ENCODE measurements at regions of chr2 and their contacts with region 1.

Region 1: GRCh38 chr2:27291865-27292264 is 9.6 kb downstream of the TRIM54 start:
- DNase-seq: peak; percentile 35
- ATAC-seq: peak; percentile 95
- H3K4me3 Mint-ChIP-seq: peak overlapping the region; percentile 29
- H3K27ac Mint-ChIP-seq: no peak overlapping the region
- H3K4me1 Mint-ChIP-seq: peaks cover 18% of the 10 kb centered on the region
- H3K27me3 Mint-ChIP-seq: no peaks in the 10 kb centered on the region
- CTCF ChIP-seq: no peak

Region 2: DNA sequence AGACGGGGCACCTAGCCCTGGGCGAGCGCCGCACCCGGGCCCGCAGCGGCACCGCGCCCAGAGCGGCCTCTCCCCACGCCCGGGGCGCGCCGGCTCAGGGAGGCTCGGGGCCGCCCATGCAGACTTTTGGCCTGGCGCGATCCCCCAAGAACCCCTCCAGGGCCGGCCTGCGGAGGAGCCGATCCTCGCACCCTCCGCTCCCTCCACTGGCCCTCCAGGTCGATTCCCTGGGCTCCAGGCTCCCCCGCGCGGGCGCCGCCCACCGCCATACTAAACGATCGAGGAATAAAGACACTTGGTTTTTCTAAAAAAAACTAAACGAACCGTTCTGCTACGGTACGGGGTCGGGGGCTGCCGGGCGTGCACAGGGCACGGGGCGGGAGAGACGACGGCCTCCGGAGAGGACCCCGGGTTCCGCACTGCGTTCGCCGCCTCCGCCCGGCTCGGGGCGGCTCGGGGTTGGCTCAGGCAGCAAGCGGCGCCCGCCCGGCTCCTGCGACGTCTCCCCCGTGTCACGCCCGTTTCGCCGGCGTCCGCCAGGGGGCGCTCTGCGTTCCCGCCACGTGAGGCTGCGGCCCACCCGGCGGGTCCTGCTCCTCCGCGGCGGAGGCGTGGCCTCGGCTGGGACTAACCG is 205.7 kb before region 1 on chr2:
- CTCF ChIA-PET with region 1: interaction called, 10 read pairs
- POLR2A ChIA-PET with region 1: interaction called, 3 read pairs
- DNase-seq: peak; percentile 97
- ATAC-seq: peak; percentile 81
- H3K4me3 Mint-ChIP-seq: peak overlapping the region; percentile 70
- H3K27ac Mint-ChIP-seq: no peak overlapping the region
- H3K4me1 Mint-ChIP-seq: peaks cover 21% of the 10 kb centered on the region
- H3K27me3 Mint-ChIP-seq: peaks cover 23% of the 10 kb centered on the region
- CTCF ChIP-seq: peak; percentile 98

Region 3: GRCh38 chr2:27249891-27250651 is 41.8 kb before region 1 on chr2:
- CTCF ChIA-PET with region 1: interaction called, 48 read pairs
- POLR2A ChIA-PET with region 1: interaction called, 6 read pairs
- DNase-seq: peak; percentile 89
- ATAC-seq: peak; percentile 86
- H3K4me3 Mint-ChIP-seq: peak overlapping the region; percentile 63
- H3K27ac Mint-ChIP-seq: no peak overlapping the region
- H3K4me1 Mint-ChIP-seq: peaks cover 18% of the 10 kb centered on the region
- H3K27me3 Mint-ChIP-seq: peaks cover 7% of the 10 kb centered on the region
- CTCF ChIP-seq: peak; percentile 56; the same call in 1 of the 2 replicates

Region 4: DNA sequence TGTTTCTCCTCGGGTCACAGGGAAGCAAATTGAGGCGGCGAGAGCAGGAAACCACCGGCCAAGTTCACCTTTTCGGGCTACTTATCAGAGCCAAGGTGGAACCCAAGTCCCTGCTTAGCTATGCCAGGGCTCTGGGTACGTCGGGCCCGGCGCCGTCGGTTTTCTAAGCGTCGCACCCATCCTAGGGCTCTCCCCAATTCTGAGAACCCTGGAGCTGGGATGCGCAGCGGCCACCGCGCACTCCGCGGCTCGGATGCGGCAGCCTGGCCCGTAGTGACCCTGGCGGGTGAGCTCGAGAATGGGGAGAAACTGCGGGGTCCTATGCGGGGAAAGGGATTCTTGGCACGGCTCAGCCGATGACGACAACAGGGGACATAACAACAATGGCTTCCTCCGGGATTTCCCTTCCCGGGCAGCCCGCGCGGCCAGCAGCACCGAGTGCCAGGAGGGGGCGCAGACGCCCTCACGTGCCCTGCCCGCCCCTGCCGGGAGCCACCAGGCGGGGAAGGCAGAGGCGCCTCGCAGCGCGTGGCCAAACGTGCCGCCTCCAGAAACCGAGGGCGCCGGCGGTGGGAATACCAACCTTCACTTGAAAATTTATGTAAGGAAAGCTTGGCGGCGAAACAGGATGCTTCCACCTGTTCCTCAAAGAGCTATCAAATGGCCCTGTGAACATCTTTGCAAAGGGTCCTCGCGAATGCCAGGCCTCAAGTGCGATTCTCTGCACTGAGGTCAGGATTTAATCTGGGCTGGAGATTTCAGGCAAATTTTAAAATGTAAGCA is 26.9 kb before region 1 on chr2:
- CTCF ChIA-PET with region 1: interaction called, 46 read pairs
- POLR2A ChIA-PET with region 1: no interaction called
- DNase-seq: peak; percentile 86
- ATAC-seq: peak; percentile 57
- H3K4me3 Mint-ChIP-seq: peak overlapping the region; percentile 93
- H3K27ac Mint-ChIP-seq: no peak overlapping the region
- H3K4me1 Mint-ChIP-seq: peaks cover 26% of the 10 kb centered on the region
- H3K27me3 Mint-ChIP-seq: peaks cover 27% of the 10 kb centered on the region
- CTCF ChIP-seq: peak; percentile 46; the same call in 1 of the 2 replicates

Region 5: GRCh38 chr2:27271631-27272340 is 20.1 kb before region 1 on chr2:
- CTCF ChIA-PET with region 1: interaction called, 46 read pairs
- POLR2A ChIA-PET with region 1: no interaction called
- DNase-seq: no peak
- ATAC-seq: no peak
- H3K4me3 Mint-ChIP-seq: no peak overlapping the region
- H3K27ac Mint-ChIP-seq: no peak overlapping the region
- H3K4me1 Mint-ChIP-seq: peaks cover 6% of the 10 kb centered on the region; the same call in 1 of the 2 replicates
- H3K27me3 Mint-ChIP-seq: peaks cover 7% of the 10 kb centered on the region
- CTCF ChIP-seq: no peak

Region 6: GRCh38 chr2:27308359-27308881 is 16.6 kb after region 1 on chr2 and contains the start of gene UCN:
- CTCF ChIA-PET with region 1: interaction called, 89 read pairs
- POLR2A ChIA-PET with region 1: interaction called, 3 read pairs
- DNase-seq: peak; percentile 79
- ATAC-seq: peak; percentile 67
- H3K4me3 Mint-ChIP-seq: peak within 1 kb of the TSS; percentile 62
- H3K27ac Mint-ChIP-seq: no peak within 1 kb of the TSS
- H3K4me1 Mint-ChIP-seq: peaks cover 3% of the 10 kb centered on the region; the same call in 1 of the 2 replicates
- H3K27me3 Mint-ChIP-seq: peaks cover 53% of the 10 kb centered on the region
- CTCF ChIP-seq: no peak
- total RNA-seq, gene UCN: 0.68 to 1.2 TPM (median 0.71 TPM) in 3 replicates

Region 7: GRCh38 chr2:27390822-27391679 is 99.2 kb after region 1 on chr2:
- CTCF ChIA-PET with region 1: no interaction called
- POLR2A ChIA-PET with region 1: no interaction called
- DNase-seq: no peak
- ATAC-seq: no peak
- H3K4me3 Mint-ChIP-seq: no peak overlapping the region
- H3K27ac Mint-ChIP-seq: no peak overlapping the region; the same call in 1 of the 2 replicates
- H3K4me1 Mint-ChIP-seq: no peaks in the 10 kb centered on the region
- H3K27me3 Mint-ChIP-seq: no peaks in the 10 kb centered on the region
- CTCF ChIP-seq: no peak

Region 8: GRCh38 chr2:27552941-27553340 is 261.1 kb after region 1 on chr2:
- CTCF ChIA-PET with region 1: no interaction called
- POLR2A ChIA-PET with region 1: no interaction called
- DNase-seq: no peak
- ATAC-seq: no peak
- H3K4me3 Mint-ChIP-seq: no peak overlapping the region
- H3K27ac Mint-ChIP-seq: no peak overlapping the region
- H3K4me1 Mint-ChIP-seq: no peaks in the 10 kb centered on the region
- H3K27me3 Mint-ChIP-seq: peaks cover 23% of the 10 kb centered on the region
- CTCF ChIP-seq: no peak

Measured in WTC11 (cell line).